Heart left ventricle (tissue), 16 donors: ENCODE measurements at regions of chr5 and their contacts with region 1.

Region 1: GRCh38 chr5:43105369-43106289 is 15.1 kb upstream of the ZNF131 start:
- DNase-seq: peak; percentile 89 to 93 (median 90)
- ATAC-seq: peak; percentile 90 to 94 (median 90)
- H3K4me3 ChIP-seq: peak overlapping the region in 11 of 12 donors; percentile 21 to 62 (median 50)
- H3K27ac ChIP-seq: peak overlapping the region in 11 of 12 donors; percentile 35 to 77 (median 61)
- H3K4me1 ChIP-seq: peaks cover 0 to 16% (median 4%) of the 10 kb centered on the region in 12 donors
- H3K27me3 ChIP-seq: no peaks in the 10 kb centered on the region
- CTCF ChIP-seq: peak; percentile 98 to 100 (median 99)
- POLR2A ChIP-seq: peak in 1 of 2 donors; percentile 23

Region 2: DNA sequence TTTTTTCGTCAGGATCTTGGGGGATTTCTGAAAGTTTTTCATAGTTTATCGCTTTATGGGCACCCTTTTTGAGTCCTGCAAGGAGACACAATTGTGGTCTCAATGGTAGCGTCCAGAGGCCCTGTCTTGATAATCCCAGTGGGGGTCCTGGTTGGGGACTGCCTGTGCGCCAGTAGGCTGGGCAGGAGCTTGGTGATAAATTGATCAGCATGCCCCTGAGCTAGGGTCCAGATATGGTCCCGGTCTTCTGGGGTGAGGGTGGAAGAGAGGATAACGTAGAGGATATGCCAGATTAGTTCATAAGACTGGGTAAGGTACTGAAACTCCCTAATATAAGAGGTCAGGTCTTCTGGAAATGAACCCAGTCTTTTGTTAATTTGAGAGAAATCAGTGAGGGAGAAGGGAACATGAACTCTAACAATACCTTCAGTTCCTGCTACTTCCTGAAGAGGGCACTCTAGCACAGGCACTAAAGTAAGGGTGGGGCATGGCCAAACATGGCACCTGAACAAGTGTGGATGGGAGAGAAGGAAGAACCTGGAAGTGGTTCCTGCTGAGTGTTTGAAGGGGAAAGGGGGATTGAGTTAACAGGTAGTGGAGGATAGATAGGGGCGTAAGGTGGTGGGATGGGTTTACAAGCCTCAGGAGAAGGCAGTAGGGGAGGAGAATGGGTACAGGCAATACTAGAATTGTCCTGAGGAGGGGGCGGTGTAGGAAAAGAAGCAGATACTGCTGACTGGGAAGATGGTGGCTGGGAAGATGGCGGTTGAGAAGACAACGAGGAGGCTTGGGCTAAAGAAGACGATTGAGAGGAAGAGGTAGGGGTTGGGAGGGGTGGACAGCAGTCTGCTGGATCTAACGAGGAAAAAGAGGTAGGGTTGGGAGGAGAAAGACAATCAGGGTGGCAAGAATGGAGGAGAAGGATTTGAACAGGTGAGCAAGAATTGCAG is 31.8 kb before region 1 on chr5:
- intact Hi-C with region 1: loop called in 5 of 10 experiments (anchors 5 kb)
- DNase-seq: no peak
- ATAC-seq: peak in 1 of 4 donors; percentile 37
- H3K4me3 ChIP-seq: no peak overlapping the region
- H3K27ac ChIP-seq: no peak overlapping the region
- H3K4me1 ChIP-seq: peaks cover 0 to 40% (median 18%) of the 10 kb centered on the region in 12 donors
- H3K27me3 ChIP-seq: no peaks in the 10 kb centered on the region
- CTCF ChIP-seq: peak; percentile 36 to 69 (median 52)
- POLR2A ChIP-seq: no peak

Region 3: GRCh38 chr5:43171914-43172313 is 66.3 kb after region 1 on chr5:
- intact Hi-C with region 1: no loop called
- DNase-seq: no peak
- ATAC-seq: no peak
- H3K4me3 ChIP-seq: no peak overlapping the region
- H3K27ac ChIP-seq: no peak overlapping the region
- H3K4me1 ChIP-seq: no peaks in the 10 kb centered on the region
- H3K27me3 ChIP-seq: no peaks in the 10 kb centered on the region
- CTCF ChIP-seq: no peak
- POLR2A ChIP-seq: no peak

Region 4: DNA sequence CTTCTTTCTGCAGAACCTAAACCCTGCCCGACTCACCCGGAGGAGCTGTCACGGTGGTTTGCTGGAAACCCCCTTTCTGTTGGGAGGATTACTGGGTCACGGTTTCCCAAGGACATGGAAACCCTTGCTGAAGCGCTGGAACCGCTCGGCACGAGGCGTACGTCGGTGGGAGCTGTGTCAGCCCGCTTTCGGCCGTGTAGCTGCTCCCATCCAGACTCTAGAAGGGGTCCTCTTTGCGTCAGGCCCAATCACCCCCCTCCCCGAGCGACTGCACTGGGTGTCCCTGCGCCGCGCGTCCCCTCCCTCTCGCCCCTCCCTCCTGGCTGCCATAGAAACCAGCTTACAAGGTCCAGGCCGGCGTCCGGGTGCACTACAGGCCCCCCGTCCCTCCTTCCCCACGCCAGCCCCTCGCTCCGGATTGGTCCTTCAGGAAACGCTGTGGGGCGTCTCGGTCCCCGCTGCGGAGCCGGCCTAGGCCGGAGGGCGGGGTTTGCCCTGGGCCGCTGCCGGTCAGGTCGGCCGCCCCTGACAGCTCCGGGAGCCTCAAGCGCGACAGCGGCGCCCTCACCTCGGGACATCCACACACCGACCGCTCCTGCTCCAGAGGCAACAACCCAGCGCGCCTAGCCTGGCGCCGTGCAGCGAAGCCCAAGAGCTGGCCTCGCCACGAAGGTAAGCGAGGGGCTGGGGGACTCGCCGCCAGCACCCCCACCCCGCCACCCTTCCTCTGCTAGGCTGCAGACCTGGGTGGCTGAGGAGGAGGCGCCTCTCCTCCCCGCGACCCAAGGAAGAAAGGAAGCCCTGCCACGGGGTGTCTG is 86.3 kb after region 1 on chr5 and contains the start of gene NIM1K:
- intact Hi-C with region 1: no loop called
- DNase-seq: peak; percentile 64 to 80 (median 72)
- ATAC-seq: peak; percentile 70 to 93 (median 89)
- H3K4me3 ChIP-seq: peak within 1 kb of the TSS; percentile 33 to 71 (median 61)
- H3K27ac ChIP-seq: peak within 1 kb of the TSS in 3 of 12 donors; percentile 14 to 40 (median 37)
- H3K4me1 ChIP-seq: peaks cover 0 to 30% (median 17%) of the 10 kb centered on the region in 12 donors
- H3K27me3 ChIP-seq: peaks cover 0 to 19% (median 0%) of the 10 kb centered on the region in 9 donors
- CTCF ChIP-seq: no peak
- POLR2A ChIP-seq: no peak
- total RNA-seq, gene NIM1K: 0.16 to 1.4 (median 0.45) TPM in 7 of 9 donors, not detected in the others

Region 5: DNA sequence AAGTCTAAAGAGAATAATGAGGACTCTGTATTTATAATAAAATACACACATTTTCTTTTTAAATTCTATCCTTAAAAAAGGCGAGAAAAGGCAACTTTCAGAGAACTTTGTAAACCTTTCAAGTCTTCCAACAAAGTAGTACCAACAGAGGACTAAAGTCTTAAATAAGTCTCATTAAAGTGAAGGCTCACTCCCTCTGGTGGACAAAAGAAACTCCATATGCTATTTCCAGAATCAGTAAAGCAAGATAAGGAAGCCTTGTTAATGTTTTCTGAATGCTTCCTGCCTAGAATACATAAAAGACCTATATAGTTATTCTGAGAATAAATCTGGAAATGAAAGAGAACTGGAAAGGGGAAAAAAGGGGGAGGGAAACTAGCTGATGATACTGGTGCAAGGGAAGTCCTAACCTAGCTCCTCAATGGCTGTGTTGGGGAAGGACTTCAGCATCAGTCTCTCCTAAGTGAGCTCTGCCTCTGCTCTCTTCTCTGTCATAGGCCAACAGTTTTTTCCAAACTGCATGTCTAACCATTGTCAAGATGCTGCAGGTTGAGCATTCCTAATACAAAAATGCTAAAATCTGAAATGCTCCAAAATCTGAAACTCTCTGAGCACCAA is 200.4 kb after region 1 on chr5:
- intact Hi-C with region 1: loop called in 4 of 10 experiments (anchors 5 to 10 kb)
- DNase-seq: no peak
- ATAC-seq: peak in 2 of 4 donors; percentile 42 to 73
- H3K4me3 ChIP-seq: no peak overlapping the region
- H3K27ac ChIP-seq: no peak overlapping the region
- H3K4me1 ChIP-seq: peaks cover 0 to 55% (median 19%) of the 10 kb centered on the region in 12 donors
- H3K27me3 ChIP-seq: no peaks in the 10 kb centered on the region
- CTCF ChIP-seq: peak; percentile 45 to 77 (median 61)
- POLR2A ChIP-seq: no peak

Region 6: DNA sequence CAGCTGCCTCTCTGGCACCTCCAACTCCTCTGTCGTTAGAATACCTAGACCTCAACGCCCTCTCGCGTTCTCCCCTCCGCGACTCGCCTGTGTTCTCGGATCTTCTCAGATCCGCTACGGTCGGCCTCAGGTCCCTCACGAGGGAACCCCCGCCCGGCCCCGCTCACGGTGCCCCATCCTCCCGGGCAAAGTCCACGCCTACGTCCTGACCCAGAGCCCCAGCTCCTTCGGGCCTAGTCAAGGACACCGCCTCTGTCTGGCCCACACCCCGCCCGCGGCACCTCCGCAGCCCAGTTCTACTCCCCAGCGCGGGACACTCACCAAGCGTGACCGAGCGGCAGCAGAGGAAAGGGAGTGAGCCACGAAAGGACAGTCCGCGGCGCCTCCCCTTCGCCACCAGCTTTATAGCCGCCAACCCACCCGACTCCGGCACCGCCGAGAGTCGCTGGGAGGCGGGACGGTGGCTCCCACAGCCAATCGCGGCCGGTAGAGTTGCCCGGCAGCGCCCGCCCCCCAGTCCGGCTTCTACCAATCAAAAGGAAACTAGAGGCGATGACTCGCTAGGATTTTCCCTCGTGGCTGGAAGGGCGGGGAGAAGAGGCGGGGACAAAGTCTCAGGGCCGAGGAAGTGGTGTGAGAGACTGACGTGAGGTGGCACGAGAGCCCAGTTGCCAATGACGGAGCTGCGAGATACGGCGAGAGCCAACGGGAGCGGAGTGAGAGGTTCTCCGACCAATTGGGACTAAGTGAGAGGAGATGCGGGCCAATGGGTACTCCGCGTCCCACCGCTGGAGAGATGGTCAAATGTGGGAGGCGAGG is 207.6 kb after region 1 on chr5 and contains the start of gene HMGCS1:
- intact Hi-C with region 1: loop called in 4 of 10 experiments (anchors 5 to 10 kb)
- DNase-seq: peak; percentile 98 to 99 (median 99)
- ATAC-seq: peak; percentile 98 to 99 (median 98)
- H3K4me3 ChIP-seq: peak within 1 kb of the TSS; percentile 67 to 97 (median 84)
- H3K27ac ChIP-seq: peak within 1 kb of the TSS; percentile 65 to 95 (median 87)
- H3K4me1 ChIP-seq: peaks cover 0 to 41% (median 25%) of the 10 kb centered on the region in 12 donors
- H3K27me3 ChIP-seq: no peaks in the 10 kb centered on the region
- CTCF ChIP-seq: peak in 2 of 12 donors; percentile 11 to 23
- POLR2A ChIP-seq: peak; percentile 93 to 96
- total RNA-seq, gene HMGCS1: 7.9 to 34.8 (median 30.0) TPM

Region 7: GRCh38 chr5:43389679-43390329 is 284.2 kb after region 1 on chr5:
- intact Hi-C with region 1: loop called in 9 of 10 experiments (anchors 5 to 10 kb)
- DNase-seq: peak in 2 of 5 donors; percentile 31 to 44
- ATAC-seq: peak in 3 of 4 donors; percentile 86 to 92 (median 92)
- H3K4me3 ChIP-seq: no peak overlapping the region
- H3K27ac ChIP-seq: no peak overlapping the region
- H3K4me1 ChIP-seq: peaks cover 0 to 4% (median 0%) of the 10 kb centered on the region in 12 donors
- H3K27me3 ChIP-seq: peaks cover 0 to 2% (median 0%) of the 10 kb centered on the region in 9 donors
- CTCF ChIP-seq: peak; percentile 70 to 89 (median 80)
- POLR2A ChIP-seq: no peak